Activated naive CD4-positive, alpha-beta T cell treated with anti-CD3 and anti-CD28 coated beads for 36 hours (primary cell): ENCODE measurements at regions of chr6 and their contacts with region 1.

Region 1: GRCh38 chr6:29976588-29977424 is 34.5 kb downstream of the HLA-A start:
- DNase-seq: peak; percentile 76
- H3K4me3 Mint-ChIP-seq: peak overlapping the region; percentile 81
- H3K27ac Mint-ChIP-seq: no peak overlapping the region
- H3K4me1 Mint-ChIP-seq: peaks cover 31% of the 10 kb centered on the region
- H3K27me3 Mint-ChIP-seq: peaks cover 34% of the 10 kb centered on the region

Region 2: GRCh38 chr6:30006170-30007131 is 29.6 kb after region 1 on chr6:
- CTCF ChIA-PET with region 1: no interaction called
- intact Hi-C with region 1: loop called (anchors 2 kb)
- DNase-seq: peak; percentile 15
- H3K4me3 Mint-ChIP-seq: peak overlapping the region; percentile 45
- H3K27ac Mint-ChIP-seq: no peak overlapping the region
- H3K4me1 Mint-ChIP-seq: peaks cover 15% of the 10 kb centered on the region
- H3K27me3 Mint-ChIP-seq: peaks cover 35% of the 10 kb centered on the region

Region 3: DNA sequence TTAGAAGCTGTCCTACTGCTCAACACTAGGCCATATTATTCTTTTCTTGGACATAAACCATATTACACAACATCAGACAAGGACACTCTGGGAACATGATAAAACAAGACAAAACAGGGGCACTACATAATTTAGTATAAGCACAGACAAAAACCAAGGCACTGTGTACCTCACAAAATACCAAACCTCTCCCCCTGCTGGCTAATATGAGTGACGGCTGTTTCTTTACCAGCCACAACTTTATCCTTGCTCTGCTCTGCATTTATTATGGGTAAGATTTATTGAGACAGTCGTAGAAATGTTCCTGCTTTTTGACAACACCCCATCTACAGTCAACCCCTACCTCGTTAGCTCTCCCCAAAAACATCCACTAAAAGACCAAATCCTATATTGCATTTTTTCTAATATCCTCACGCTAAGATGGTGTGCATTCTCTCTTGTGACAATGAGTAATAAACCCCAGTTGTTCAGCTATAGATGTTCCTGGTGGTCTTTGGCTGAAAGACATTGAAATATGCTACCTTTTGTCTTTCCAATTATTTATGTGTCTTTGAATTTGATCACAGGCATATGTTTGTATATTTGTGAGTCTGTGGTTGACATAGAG is 60.5 kb after region 1 on chr6:
- CTCF ChIA-PET with region 1: no interaction called
- intact Hi-C with region 1: no loop called
- DNase-seq: no peak
- H3K4me3 Mint-ChIP-seq: no peak overlapping the region
- H3K27ac Mint-ChIP-seq: no peak overlapping the region
- H3K4me1 Mint-ChIP-seq: no peaks in the 10 kb centered on the region
- H3K27me3 Mint-ChIP-seq: no peaks in the 10 kb centered on the region